Dendritic cell treated with granulocyte-macrophage colony-stimulating factor and Interleukin-4, amounts not matched to agents 40 ng/mL and 50 ng/mL, for 4 days (primary cell): ENCODE measurements at regions of chr12 and their contacts with region 1.

Region 1: GRCh38 chr12:30695199-30696103 is at the start of gene IPO8:
- H3K4me3 Mint-ChIP-seq: peak within 1 kb of the TSS; percentile 91
- H3K27ac Mint-ChIP-seq: peak within 1 kb of the TSS; percentile 90
- H3K4me1 Mint-ChIP-seq: peaks cover 29% of the 10 kb centered on the region
- H3K27me3 Mint-ChIP-seq: peaks cover 4% of the 10 kb centered on the region

Region 2: DNA sequence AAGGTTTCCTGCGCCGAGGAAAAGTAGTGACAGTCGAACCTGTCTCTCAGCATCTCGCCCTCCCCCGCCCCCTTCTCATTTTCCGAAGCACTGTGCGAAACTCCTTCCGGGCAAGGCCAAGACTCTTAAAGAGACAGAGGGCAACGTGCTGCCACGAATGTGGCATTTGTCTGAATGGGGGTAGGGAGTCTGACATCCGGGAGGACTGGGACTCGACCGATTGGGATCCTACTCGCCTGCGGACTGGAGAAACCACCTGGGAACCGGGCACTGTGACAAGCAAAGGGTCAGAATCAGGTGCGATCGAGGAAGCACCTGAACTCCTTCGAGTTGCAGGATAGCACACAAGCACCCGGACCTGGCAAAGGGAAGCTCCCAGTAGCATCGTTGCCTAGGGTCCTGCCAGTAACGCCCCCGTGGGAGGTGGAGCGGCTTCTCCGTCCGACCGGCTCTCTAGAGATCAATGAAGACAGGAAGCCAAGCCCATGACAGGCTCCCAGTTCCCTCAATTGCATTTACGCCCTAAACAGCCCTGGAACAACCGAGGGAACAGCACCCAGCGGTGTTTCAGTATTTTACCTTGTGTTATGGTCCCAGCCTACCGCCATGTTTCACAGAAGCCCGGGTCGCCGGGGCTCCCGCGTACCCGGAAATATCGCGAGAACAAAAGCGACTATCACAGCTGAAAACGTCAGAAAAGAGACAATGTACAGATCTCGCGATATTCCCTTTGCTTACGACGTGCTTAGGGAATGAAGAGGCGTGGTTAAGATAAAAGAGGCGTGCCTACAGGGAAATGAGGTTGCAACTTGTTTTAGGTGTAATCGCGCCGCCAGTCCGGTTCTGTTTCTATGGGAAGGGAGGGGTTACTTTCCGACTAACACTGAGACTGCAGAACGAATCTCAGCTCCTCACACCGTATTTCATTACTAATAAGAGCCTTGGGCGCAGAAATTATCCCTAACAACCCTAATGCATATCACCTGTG is 1314.6 kb before region 1 on chr12 and contains the start of gene ERGIC2:
- intact Hi-C with region 1: loop called (anchors 5 kb)
- H3K4me3 Mint-ChIP-seq: peak within 1 kb of the TSS; percentile 86
- H3K27ac Mint-ChIP-seq: peak within 1 kb of the TSS; percentile 87
- H3K4me1 Mint-ChIP-seq: peaks cover 13% of the 10 kb centered on the region
- H3K27me3 Mint-ChIP-seq: peaks cover 7% of the 10 kb centered on the region

Region 3: DNA sequence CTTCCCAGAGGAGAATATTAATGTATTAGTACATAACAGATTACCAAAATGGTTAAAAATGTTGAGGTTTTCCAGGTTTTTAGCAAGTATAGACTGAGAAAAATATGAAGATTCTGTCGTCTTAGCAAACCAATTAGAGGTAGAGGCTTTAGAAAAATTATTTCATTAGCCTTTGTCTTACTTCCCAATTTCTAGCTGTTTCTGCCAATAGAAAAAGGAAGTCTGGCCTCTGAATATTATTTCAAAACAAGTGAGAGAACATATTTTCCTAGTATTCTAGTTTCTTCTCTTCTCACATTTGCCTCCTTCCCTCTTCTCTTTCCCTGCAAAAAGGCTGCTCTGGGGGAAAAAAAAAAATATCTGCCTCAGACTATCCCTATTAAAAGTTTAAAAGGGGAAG is 16.2 kb before region 1 on chr12:
- intact Hi-C with region 1: loop called (anchors 2 kb)
- H3K4me3 Mint-ChIP-seq: no peak overlapping the region
- H3K27ac Mint-ChIP-seq: peak overlapping the region; percentile 59
- H3K4me1 Mint-ChIP-seq: peaks cover 33% of the 10 kb centered on the region
- H3K27me3 Mint-ChIP-seq: no peaks in the 10 kb centered on the region